Transverse colon (tissue), 4 donors: ENCODE measurements at regions of chr3 and their contacts with region 1.

Region 1: GRCh38 chr3:106172780-106173179 is 304.0 kb upstream of the CBLB start:
- DNase-seq: no peak
- H3K4me3 ChIP-seq: no peak overlapping the region
- H3K27ac ChIP-seq: no peak overlapping the region
- H3K4me1 ChIP-seq: peaks cover 0 to 4% (median 0%) of the 10 kb centered on the region in 4 donors
- H3K27me3 ChIP-seq: no peaks in the 10 kb centered on the region
- CTCF ChIP-seq: no peak
- EP300 ChIP-seq: no peak
- POLR2A ChIP-seq: no peak

Region 2: GRCh38 chr3:106068795-106069194 is 104.0 kb before region 1 on chr3:
- in situ Hi-C with region 1: loop called in 1 of 4 experiments (anchors 25 kb)
- intact Hi-C with region 1: no loop called
- DNase-seq: no peak
- H3K4me3 ChIP-seq: no peak overlapping the region
- H3K27ac ChIP-seq: no peak overlapping the region
- H3K4me1 ChIP-seq: peaks cover 0 to 6% (median 0%) of the 10 kb centered on the region in 4 donors
- H3K27me3 ChIP-seq: no peaks in the 10 kb centered on the region
- CTCF ChIP-seq: no peak
- EP300 ChIP-seq: no peak
- POLR2A ChIP-seq: no peak

Region 3: GRCh38 chr3:106302451-106303221 is 129.9 kb after region 1 on chr3:
- in situ Hi-C with region 1: no loop called
- intact Hi-C with region 1: no loop called
- DNase-seq: no peak
- H3K4me3 ChIP-seq: no peak overlapping the region
- H3K27ac ChIP-seq: no peak overlapping the region
- H3K4me1 ChIP-seq: no peaks in the 10 kb centered on the region
- H3K27me3 ChIP-seq: no peaks in the 10 kb centered on the region
- CTCF ChIP-seq: no peak
- EP300 ChIP-seq: no peak
- POLR2A ChIP-seq: no peak